ENCODE measurements at regions of chr16 and their contacts with region 1.

Region 1: GRCh38 chr16:85220125-85220839 is 108.0 kb upstream of the CIBAR2 start:
- DNase-seq: peak; percentile 44 to 84 (median 73)
- H3K4me3 ChIP-seq: peak overlapping the region in 48 of 59 donors; percentile 2 to 59 (median 28)
- H3K27ac ChIP-seq: peak overlapping the region in 3 of 59 donors; percentile 20 to 77 (median 47)
- H3K27me3 ChIP-seq: no peaks in the 10 kb centered on the region
- CTCF ChIP-seq: peak in 8 of 56 donors; percentile 11 to 28 (median 16)

Region 2: DNA sequence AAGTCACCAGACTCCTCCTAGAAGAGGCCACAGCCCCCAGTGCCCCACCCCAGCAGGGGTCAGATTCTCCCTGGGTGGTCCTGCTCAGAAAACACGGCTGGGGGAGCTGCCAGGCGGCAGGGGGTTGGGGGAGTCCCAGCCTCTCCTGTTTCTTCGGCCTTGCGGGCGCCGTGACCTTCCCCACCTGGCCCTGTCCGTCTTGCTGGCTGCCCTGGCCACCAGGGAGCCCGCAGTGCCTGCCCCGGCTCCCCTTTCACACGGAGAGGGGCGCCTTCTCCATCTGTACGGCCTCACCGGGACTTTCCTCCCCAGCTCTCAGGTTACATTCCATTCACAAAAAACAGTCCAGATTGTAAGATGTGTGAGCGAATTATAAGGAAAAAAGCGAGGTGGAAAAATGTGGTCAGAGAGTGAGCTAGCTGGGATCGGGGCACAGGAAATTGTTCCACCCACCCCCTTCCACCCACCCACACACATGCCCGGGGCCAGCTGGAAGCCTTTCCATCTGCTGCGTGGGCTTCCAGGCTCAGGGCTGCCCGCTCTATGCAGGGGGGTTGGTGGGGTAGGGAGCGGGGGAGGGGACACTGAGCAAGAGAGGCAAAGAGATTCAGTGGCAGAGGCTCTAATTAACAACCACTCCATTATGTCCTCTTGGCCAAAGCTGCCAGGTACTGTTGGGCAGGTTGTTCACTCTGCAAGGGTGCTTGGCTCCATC is 93.4 kb before region 1 on chr16:
- intact Hi-C with region 1: loop called in 1 of 2 experiments (anchors 10 kb)
- DNase-seq: peak in 4 of 10 donors; percentile 55 to 85 (median 59)
- H3K4me3 ChIP-seq: no peak overlapping the region
- H3K27ac ChIP-seq: peak overlapping the region in 1 of 59 donors; percentile 68
- H3K27me3 ChIP-seq: no peaks in the 10 kb centered on the region
- CTCF ChIP-seq: no peak

Measured in dorsolateral prefrontal cortex (tissue), 120 donors.